H1 (cell line): ENCODE measurements at regions of chr5 and their contacts with region 1.

Region 1: DNA sequence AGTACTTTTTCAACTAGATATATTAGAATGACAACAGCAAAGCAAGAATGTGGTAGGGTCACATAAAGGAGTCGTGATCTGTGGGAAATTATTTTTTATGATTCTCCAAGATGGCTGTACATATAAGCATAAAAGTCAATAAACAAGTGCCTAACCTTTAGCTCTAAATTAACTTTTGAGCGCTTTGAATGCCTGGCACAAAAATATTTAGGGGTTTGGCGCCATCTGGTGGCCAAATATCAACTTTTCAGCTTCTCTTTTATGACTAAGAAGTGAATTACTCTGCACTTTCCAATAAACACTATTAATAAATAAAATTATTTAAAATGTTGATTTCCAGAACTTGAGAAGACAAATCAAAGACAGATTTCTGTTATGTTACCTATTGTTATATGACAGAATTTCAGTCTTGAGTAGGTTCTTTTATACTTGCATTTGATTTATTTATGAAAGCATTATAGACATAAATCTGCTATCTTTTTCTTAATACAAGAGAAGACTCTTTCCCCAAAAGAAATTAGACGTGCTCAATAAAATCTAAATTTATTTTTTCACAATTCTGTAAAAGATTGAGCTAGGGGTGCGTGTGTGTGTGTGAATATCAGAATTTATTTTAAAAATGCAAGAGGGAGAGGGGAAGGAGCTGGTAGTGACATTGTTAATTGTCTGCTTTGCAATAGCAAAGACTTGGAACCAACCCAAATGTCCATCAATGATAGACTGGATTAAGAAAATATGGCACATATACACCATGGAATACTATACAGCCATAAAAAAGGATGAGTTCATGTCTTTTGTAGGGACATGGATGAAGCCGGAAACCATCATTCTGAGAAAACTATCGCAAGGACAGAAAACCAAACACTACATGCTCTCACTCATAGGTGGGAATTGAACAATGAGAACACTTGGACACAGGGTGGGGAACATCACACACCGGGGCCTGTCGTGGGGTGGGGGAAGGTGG is 36.7 kb upstream of the ARRDC3 start:
- DNase-seq: peak in 1 of 2 experiments; percentile 71
- H3K4me3 ChIP-seq: no peak overlapping the region
- H3K27ac ChIP-seq: no peak overlapping the region
- H3K4me1 ChIP-seq: peaks cover 0 to 3% (median under 1%) of the 10 kb centered on the region in 4 experiments; a peak in 3 of 7 replicates
- H3K27me3 ChIP-seq: no peaks in the 10 kb centered on the region
- CTCF ChIP-seq: peak in 2 of 3 experiments; percentile 42 to 50; a peak in 3 of 4 replicates
- EP300 ChIP-seq: no peak
- POLR2A ChIP-seq: no peak
- RAD21 ChIP-seq: peak; percentile 68 to 79

Region 2: DNA sequence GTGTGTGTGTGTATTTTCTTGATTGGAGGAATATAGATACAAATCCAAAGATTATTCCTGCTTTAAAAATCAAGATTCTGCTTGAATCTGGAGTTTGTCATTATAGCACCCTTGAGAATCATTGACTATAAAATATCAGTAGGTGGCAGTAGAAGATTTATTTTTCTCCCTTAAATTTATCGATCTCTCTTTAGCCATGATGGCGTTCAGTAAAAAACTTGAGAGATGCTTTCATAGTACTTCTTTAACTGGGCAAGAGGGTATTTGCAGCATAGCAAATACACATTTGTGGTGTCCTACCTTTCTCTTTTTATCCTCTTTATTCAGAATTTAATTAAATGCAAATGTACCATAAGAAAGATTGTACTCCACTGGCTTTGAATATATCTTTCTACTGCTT is 553.5 kb before region 1 on chr5:
- CTCF ChIA-PET with region 1: interaction called, 16 read pairs
- POLR2A ChIA-PET with region 1: no interaction called
- DNase-seq: no peak
- H3K4me3 ChIP-seq: no peak overlapping the region
- H3K27ac ChIP-seq: no peak overlapping the region
- H3K4me1 ChIP-seq: no peaks in the 10 kb centered on the region; a peak in 1 of 7 replicates
- H3K27me3 ChIP-seq: no peaks in the 10 kb centered on the region
- CTCF ChIP-seq: peak in 1 of 3 experiments; percentile 31; a peak in 2 of 4 replicates
- EP300 ChIP-seq: no peak
- POLR2A ChIP-seq: no peak
- RAD21 ChIP-seq: peak; percentile 57 to 68

Region 3: GRCh38 chr5:91219803-91220371 is 200.0 kb before region 1 on chr5:
- CTCF ChIA-PET with region 1: interaction called, 122 read pairs
- POLR2A ChIA-PET with region 1: no interaction called
- DNase-seq: no peak
- H3K4me3 ChIP-seq: no peak overlapping the region
- H3K27ac ChIP-seq: no peak overlapping the region
- H3K4me1 ChIP-seq: no peaks in the 10 kb centered on the region
- H3K27me3 ChIP-seq: no peaks in the 10 kb centered on the region
- CTCF ChIP-seq: peak in 2 of 3 experiments; percentile 47 to 59; a peak in 3 of 4 replicates
- EP300 ChIP-seq: no peak
- POLR2A ChIP-seq: no peak
- RAD21 ChIP-seq: peak; percentile 56 to 60

Region 4: GRCh38 chr5:91235271-91235694 is 184.6 kb before region 1 on chr5:
- CTCF ChIA-PET with region 1: interaction called, 13 read pairs
- POLR2A ChIA-PET with region 1: no interaction called
- DNase-seq: no peak
- H3K4me3 ChIP-seq: no peak overlapping the region
- H3K27ac ChIP-seq: no peak overlapping the region
- H3K4me1 ChIP-seq: no peaks in the 10 kb centered on the region
- H3K27me3 ChIP-seq: no peaks in the 10 kb centered on the region
- CTCF ChIP-seq: no peak
- EP300 ChIP-seq: no peak
- POLR2A ChIP-seq: no peak
- RAD21 ChIP-seq: no peak

Region 5: GRCh38 chr5:91434348-91434747 is 14.5 kb after region 1 on chr5:
- CTCF ChIA-PET with region 1: interaction called, 52 read pairs
- POLR2A ChIA-PET with region 1: interaction called, 3 read pairs
- DNase-seq: no peak
- H3K4me3 ChIP-seq: no peak overlapping the region
- H3K27ac ChIP-seq: no peak overlapping the region
- H3K4me1 ChIP-seq: peaks cover 0 to 3% (median 1%) of the 10 kb centered on the region in 4 experiments; a peak in 3 of 7 replicates
- H3K27me3 ChIP-seq: no peaks in the 10 kb centered on the region
- CTCF ChIP-seq: no peak
- EP300 ChIP-seq: no peak
- POLR2A ChIP-seq: no peak
- RAD21 ChIP-seq: no peak